Natural killer cell (primary cell): ENCODE measurements at regions of chr6 and their contacts with region 1.

Region 1: GRCh38 chr6:70686548-70687133 is 19.0 kb downstream of the SMAP1 start:
- DNase-seq: peak in 1 of 2 donors; percentile 67
- ATAC-seq: peak; percentile 57 to 66 (median 60)
- H3K4me3 ChIP-seq: no peak overlapping the region
- H3K4me3 Mint-ChIP-seq: no peak overlapping the region
- H3K27ac ChIP-seq: no peak overlapping the region
- H3K27ac Mint-ChIP-seq: no peak overlapping the region
- H3K4me1 ChIP-seq: no peaks in the 10 kb centered on the region
- H3K4me1 Mint-ChIP-seq: peaks cover 55 to 65% of the 10 kb centered on the region in 2 donors
- H3K27me3 ChIP-seq: no peaks in the 10 kb centered on the region
- H3K27me3 Mint-ChIP-seq: no peaks in the 10 kb centered on the region
- CTCF ChIP-seq: peak; percentile 93

Region 2: DNA sequence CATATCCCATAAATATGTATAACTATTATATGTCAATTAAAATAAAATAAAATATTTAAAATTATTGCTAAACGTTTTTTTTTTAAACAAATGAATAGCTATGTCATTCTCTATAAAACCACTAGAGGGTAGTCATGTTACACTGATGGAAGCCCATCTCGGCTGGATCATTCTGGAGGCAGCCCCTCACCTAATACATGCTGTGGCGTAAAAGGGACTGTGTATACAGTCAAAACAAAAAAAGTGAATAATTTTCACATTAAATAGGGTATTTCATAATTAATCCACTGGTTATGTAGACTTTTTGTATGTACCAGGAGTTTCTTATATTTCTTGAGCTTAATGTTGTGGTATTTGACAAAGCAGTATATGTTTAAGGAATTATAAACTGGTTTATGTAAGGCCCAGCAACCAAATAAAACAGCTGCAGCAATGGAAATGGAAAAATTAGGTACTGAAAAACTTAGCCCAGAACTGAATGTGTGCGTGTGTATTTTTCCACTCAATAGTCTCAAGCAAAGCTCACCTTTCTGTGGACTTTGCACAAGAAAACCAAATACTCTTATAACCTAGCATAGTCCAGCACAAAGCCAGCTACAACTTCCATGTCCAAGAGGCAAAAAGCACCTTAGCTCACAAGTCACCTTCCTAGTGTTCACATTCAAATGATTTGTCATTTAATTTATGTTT is 465.5 kb before region 1 on chr6:
- intact Hi-C with region 1: loop called (anchors 5 kb)
- DNase-seq: peak in 1 of 2 donors; percentile 38
- ATAC-seq: peak in 1 of 3 donors; percentile 50
- H3K4me3 ChIP-seq: no peak overlapping the region
- H3K4me3 Mint-ChIP-seq: no peak overlapping the region
- H3K27ac ChIP-seq: no peak overlapping the region
- H3K27ac Mint-ChIP-seq: no peak overlapping the region
- H3K4me1 ChIP-seq: no peaks in the 10 kb centered on the region
- H3K4me1 Mint-ChIP-seq: no peaks in the 10 kb centered on the region
- H3K27me3 ChIP-seq: no peaks in the 10 kb centered on the region
- H3K27me3 Mint-ChIP-seq: peaks cover 0 to 5% of the 10 kb centered on the region in 2 donors
- CTCF ChIP-seq: peak; percentile 57

Region 3: DNA sequence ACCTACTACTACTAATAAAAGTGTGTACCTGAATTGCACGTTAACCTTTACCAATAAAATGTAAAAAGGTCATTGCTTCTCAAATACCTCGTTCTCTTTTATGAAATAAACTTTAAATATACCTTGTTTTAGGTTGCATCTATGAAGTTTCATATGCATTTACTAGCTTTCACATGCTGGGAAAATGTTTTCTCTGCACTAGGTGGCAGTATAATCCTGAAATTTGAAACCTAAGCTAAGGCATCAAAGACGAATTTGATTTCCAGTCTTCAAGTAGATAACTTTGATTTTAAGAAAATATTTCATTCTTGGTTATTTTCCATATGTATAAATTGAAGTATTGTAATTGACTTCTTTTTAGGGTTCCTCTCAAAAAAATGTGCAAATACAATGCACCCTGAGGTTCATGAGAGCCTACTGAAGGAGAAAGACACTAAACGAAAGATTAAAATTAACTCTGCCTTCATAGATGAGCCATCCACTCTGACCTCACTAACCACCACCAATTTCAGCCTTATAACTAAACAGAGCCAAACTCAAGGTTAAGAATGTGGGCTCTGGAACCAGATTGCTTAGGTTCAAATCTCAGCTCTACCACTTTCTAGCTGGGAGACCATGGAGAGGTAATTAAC is 376.5 kb before region 1 on chr6:
- intact Hi-C with region 1: loop called (anchors 5 kb)
- DNase-seq: peak in 1 of 2 donors; percentile 49
- ATAC-seq: no peak
- H3K4me3 ChIP-seq: no peak overlapping the region
- H3K4me3 Mint-ChIP-seq: no peak overlapping the region
- H3K27ac ChIP-seq: no peak overlapping the region
- H3K27ac Mint-ChIP-seq: no peak overlapping the region
- H3K4me1 ChIP-seq: no peaks in the 10 kb centered on the region
- H3K4me1 Mint-ChIP-seq: no peaks in the 10 kb centered on the region
- H3K27me3 ChIP-seq: no peaks in the 10 kb centered on the region
- H3K27me3 Mint-ChIP-seq: peaks cover 6% of the 10 kb centered on the region in 2 donors
- CTCF ChIP-seq: peak; percentile 13

Region 4: DNA sequence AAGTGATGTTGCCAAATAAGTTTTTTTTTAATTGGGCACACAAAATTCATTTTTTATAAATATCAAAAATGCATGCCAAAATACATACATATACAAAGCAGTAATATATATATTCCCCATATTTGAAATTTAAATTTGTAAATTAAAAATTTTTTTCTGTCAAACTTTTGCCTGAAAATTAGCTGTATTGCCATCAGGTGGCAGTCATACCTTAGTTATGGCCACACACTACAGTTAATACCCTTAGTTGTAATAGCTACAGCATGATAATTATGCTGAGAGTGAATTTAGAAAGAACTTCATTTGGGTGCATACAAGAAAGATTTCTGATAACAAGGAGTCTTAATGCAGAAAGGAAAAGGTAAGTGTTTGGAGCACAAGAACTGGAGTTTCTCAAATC is 166.1 kb before region 1 on chr6:
- intact Hi-C with region 1: loop called (anchors 1 kb)
- DNase-seq: peak in 1 of 2 donors; percentile 59
- ATAC-seq: peak in 1 of 3 donors; percentile 44
- H3K4me3 ChIP-seq: no peak overlapping the region
- H3K4me3 Mint-ChIP-seq: no peak overlapping the region
- H3K27ac ChIP-seq: no peak overlapping the region
- H3K27ac Mint-ChIP-seq: no peak overlapping the region
- H3K4me1 ChIP-seq: no peaks in the 10 kb centered on the region
- H3K4me1 Mint-ChIP-seq: no peaks in the 10 kb centered on the region
- H3K27me3 ChIP-seq: no peaks in the 10 kb centered on the region
- H3K27me3 Mint-ChIP-seq: no peaks in the 10 kb centered on the region
- CTCF ChIP-seq: peak; percentile 46

Region 5: GRCh38 chr6:70547313-70547712 is 139.3 kb before region 1 on chr6:
- intact Hi-C with region 1: loop called (anchors 2 kb)
- DNase-seq: peak in 1 of 2 donors; percentile 45
- ATAC-seq: no peak
- H3K4me3 ChIP-seq: no peak overlapping the region
- H3K4me3 Mint-ChIP-seq: no peak overlapping the region
- H3K27ac ChIP-seq: no peak overlapping the region
- H3K27ac Mint-ChIP-seq: no peak overlapping the region
- H3K4me1 ChIP-seq: no peaks in the 10 kb centered on the region
- H3K4me1 Mint-ChIP-seq: no peaks in the 10 kb centered on the region
- H3K27me3 ChIP-seq: no peaks in the 10 kb centered on the region
- H3K27me3 Mint-ChIP-seq: no peaks in the 10 kb centered on the region
- CTCF ChIP-seq: no peak